ENCODE measurements at regions of chr3 and their contacts with region 1.

Region 1: DNA sequence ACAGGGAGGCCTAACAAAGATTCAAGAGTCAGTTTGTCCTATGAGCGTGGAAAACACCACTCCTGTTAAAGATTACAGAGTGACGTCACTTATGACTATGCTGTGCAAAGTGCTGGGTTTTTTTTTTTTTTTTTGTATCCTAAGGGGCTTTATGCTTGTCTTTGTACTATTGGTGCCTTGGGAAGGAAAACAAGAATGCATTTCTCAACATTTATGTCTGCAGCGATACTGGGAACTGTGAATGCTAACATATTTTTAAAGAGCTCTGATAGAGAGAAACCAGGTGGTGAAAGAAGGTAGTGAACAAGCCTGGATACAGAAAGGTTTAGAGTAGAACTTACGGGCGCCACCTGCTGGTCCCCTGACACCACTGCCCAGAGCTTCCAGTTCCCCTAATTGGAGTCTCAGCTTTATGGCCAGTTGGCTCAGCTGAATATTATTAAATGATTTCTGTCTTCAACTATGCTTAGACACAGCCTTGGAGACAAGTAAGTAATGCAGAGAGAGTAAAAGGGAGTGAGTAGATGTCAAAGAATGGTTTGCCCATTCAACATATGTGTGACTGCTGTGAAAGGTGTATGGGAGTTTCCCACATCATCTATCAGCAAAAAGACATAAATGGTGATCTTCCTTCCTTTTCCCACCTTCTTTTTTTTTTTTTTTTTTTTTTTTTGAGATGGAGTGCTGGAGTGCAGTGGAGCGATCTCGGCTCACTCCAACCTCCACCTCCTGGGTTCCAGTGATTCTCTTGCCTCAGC is 807.9 kb upstream of the CFAP20DC start:
- DNase-seq: peak; percentile 58
- H3K4me3 ChIP-seq: no peak overlapping the region
- H3K27ac ChIP-seq: no peak overlapping the region
- H3K4me1 ChIP-seq: no peaks in the 10 kb centered on the region
- H3K27me3 ChIP-seq: no peaks in the 10 kb centered on the region
- CTCF ChIP-seq: peak; percentile 79 to 89
- POLR2A ChIP-seq: no peak

Region 2: DNA sequence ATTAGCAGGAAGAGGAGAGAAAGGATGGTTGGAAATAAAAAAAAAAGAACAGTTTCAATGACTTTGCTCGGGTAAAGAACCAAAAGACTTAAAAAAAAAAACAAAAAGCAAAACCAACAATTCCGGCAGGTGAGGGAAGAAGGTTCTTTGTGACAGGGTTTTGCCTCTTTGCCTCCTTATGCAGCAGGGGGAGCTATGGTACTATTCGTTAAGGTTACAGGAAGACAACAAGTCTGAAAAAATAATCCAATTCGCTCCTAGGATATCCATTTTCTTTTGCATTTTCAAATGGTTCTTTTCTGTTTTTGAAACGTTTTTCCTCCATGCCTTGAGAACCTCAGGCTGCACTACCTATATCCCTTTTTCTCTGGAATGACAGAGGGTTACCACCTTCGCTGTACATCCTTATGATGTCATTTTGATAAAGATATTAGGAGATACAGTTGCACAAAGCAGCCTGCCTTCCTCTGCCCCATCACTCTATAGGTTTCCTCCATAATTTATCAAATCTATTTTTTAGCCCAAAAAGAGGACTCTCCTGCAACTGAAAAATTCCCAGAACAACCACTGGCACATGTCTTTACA is 862.9 kb before region 1 on chr3:
- CTCF ChIA-PET with region 1: interaction called, 19 read pairs
- POLR2A ChIA-PET with region 1: no interaction called
- dilution Hi-C with region 1: no loop called
- intact Hi-C with region 1: loop called (anchors 1 kb)
- DNase-seq: peak; percentile 60
- H3K4me3 ChIP-seq: no peak overlapping the region
- H3K27ac ChIP-seq: no peak overlapping the region
- H3K4me1 ChIP-seq: peaks cover 19% of the 10 kb centered on the region
- H3K27me3 ChIP-seq: no peaks in the 10 kb centered on the region
- CTCF ChIP-seq: peak; percentile 59 to 71
- POLR2A ChIP-seq: no peak

Region 3: DNA sequence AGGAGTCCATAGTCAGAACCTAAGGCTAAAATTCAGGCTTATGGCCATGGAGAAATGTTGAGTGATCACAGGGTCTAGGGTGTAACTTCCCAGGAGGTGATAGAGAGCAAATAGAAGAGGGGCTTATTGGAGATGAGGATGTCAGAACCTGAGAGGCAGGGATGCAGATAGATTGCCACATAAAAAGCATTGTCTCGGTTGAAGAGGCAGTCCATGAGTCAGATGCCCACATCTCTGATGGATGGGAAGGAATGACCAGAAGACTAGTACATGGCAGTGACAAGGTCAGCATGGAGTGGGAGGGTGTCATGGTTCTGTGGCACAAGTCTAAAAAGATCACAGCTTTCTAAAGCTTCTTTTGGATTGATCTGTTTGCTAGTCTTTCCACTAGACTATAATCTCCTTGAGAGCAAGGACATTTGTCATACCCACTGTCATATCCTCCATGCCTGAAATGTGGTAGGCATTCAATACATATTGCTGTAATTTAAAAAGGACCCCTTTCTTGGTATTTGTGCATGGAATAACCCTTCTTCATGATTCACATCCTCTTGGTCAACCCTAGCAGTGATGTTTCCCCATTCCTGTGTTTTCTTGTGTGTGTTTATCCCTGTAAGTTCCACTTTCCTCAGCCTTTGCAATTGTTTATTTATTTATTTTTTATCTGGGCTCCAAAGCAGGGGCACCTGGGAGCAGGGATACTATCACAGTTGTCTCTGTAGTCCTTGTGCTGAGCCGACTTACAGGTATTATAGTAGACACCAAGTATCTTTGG is 194.5 kb before region 1 on chr3:
- CTCF ChIA-PET with region 1: no interaction called
- POLR2A ChIA-PET with region 1: no interaction called
- dilution Hi-C with region 1: no loop called
- intact Hi-C with region 1: no loop called
- DNase-seq: no peak
- H3K4me3 ChIP-seq: no peak overlapping the region
- H3K27ac ChIP-seq: no peak overlapping the region
- H3K4me1 ChIP-seq: no peaks in the 10 kb centered on the region
- H3K27me3 ChIP-seq: no peaks in the 10 kb centered on the region
- CTCF ChIP-seq: no peak
- POLR2A ChIP-seq: no peak

Region 4: DNA sequence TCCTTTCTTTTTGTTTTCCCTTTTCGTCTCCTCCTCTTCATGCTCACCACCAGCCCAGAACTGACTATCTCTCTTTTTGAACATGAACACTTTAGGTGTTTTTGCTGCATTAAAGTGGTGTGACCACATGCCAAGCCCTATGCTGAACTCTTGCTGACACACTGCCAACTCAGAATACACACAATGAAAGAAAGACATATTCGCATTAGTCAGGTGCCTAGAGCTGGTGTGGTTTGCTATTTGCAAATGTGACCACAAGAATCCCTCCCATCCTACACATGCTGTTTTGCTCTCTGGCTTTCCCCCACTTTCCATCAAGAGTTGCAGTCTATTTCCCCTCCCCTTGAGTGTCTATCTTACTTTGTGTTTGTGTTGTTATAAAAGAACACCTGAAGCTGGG is 159.9 kb after region 1 on chr3:
- CTCF ChIA-PET with region 1: no interaction called
- POLR2A ChIA-PET with region 1: no interaction called
- dilution Hi-C with region 1: no loop called
- intact Hi-C with region 1: no loop called
- DNase-seq: no peak
- H3K4me3 ChIP-seq: no peak overlapping the region
- H3K27ac ChIP-seq: no peak overlapping the region
- H3K4me1 ChIP-seq: no peaks in the 10 kb centered on the region
- H3K27me3 ChIP-seq: no peaks in the 10 kb centered on the region
- CTCF ChIP-seq: no peak
- POLR2A ChIP-seq: no peak

Measured in endothelial cell of umbilical vein (primary cell).